ENCODE measurements at regions of chr11 and their contacts with region 1.

Region 1: GRCh38 chr11:111938687-111939160 is 1.6 kb downstream of the DIXDC1 start:
- DNase-seq: no peak
- H3K4me3 ChIP-seq: peak overlapping the region in 1 of 4 donors; percentile 1
- H3K27ac ChIP-seq: peak overlapping the region; percentile 78 to 90 (median 83)
- H3K4me1 ChIP-seq: peaks cover 10 to 43% (median 29%) of the 10 kb centered on the region in 4 donors
- H3K27me3 ChIP-seq: no peaks in the 10 kb centered on the region
- CTCF ChIP-seq: no peak
- EP300 ChIP-seq: no peak
- POLR2A ChIP-seq: no peak

Region 2: GRCh38 chr11:111878849-111879636 is 59.7 kb before region 1 on chr11 and contains the starts of genes CFAP68 and FDXACB1:
- in situ Hi-C with region 1: no loop called
- intact Hi-C with region 1: no loop called
- DNase-seq: peak; percentile 97
- H3K4me3 ChIP-seq: peak within 1 kb of the TSS; percentile 48 to 58 (median 49)
- H3K27ac ChIP-seq: peak within 1 kb of the TSS; percentile 88 to 96 (median 92)
- H3K4me1 ChIP-seq: peaks cover 6 to 16% (median 9%) of the 10 kb centered on the region in 4 donors
- H3K27me3 ChIP-seq: no peaks in the 10 kb centered on the region
- CTCF ChIP-seq: peak; percentile 94 to 99 (median 98)
- EP300 ChIP-seq: peak; percentile 21
- POLR2A ChIP-seq: peak; percentile 51
- total RNA-seq, gene CFAP68: 0.20 to 19.8 (median 18.8) TPM in 3 of 4 donors, not detected in the other
- total RNA-seq, gene FDXACB1: 1.4 to 3.4 (median 1.5) TPM in 3 of 4 donors, not detected in the other

Region 3: GRCh38 chr11:112074026-112074811 is 135.5 kb after region 1 on chr11 and contains the start of gene NKAPD1:
- in situ Hi-C with region 1: loop called in 1 of 4 experiments (anchors 10 kb)
- intact Hi-C with region 1: no loop called
- DNase-seq: peak; percentile 79
- H3K4me3 ChIP-seq: peak within 1 kb of the TSS; percentile 55 to 83 (median 71)
- H3K27ac ChIP-seq: peak within 1 kb of the TSS; percentile 86 to 90 (median 90)
- H3K4me1 ChIP-seq: peaks cover 8 to 22% (median 15%) of the 10 kb centered on the region in 4 donors
- H3K27me3 ChIP-seq: no peaks in the 10 kb centered on the region
- CTCF ChIP-seq: peak in 2 of 5 experiments; percentile 25 to 31
- EP300 ChIP-seq: no peak
- POLR2A ChIP-seq: peak; percentile 32
- total RNA-seq, gene NKAPD1: 3.0 to 24.0 (median 8.7) TPM

Region 4: DNA sequence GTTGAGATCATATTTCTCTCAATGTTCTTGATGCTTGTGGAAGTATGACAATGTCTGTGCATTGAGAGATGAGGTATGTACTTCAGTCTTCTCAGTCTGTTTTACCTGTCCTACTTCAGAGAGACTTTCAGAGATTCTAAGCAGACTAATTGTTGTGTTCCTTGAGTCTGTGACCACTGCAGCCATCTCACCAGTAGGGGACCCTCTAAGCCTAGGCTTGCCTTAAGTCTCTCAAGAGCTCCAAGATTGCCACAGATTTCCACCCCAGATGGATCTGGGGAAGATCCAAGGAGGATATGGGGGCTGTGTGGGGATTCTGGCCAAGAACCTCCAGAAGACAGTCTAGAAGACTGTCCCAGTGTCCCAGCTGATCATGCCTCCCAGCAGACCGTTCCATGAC is 501.8 kb after region 1 on chr11:
- in situ Hi-C with region 1: no loop called
- intact Hi-C with region 1: no loop called
- DNase-seq: no peak
- H3K4me3 ChIP-seq: no peak overlapping the region
- H3K27ac ChIP-seq: no peak overlapping the region
- H3K4me1 ChIP-seq: no peaks in the 10 kb centered on the region
- H3K27me3 ChIP-seq: no peaks in the 10 kb centered on the region
- CTCF ChIP-seq: no peak
- EP300 ChIP-seq: no peak
- POLR2A ChIP-seq: no peak

Measured in transverse colon (tissue), 4 donors.